ENCODE measurements at regions of chr15 and their contacts with region 1.

Region 1: DNA sequence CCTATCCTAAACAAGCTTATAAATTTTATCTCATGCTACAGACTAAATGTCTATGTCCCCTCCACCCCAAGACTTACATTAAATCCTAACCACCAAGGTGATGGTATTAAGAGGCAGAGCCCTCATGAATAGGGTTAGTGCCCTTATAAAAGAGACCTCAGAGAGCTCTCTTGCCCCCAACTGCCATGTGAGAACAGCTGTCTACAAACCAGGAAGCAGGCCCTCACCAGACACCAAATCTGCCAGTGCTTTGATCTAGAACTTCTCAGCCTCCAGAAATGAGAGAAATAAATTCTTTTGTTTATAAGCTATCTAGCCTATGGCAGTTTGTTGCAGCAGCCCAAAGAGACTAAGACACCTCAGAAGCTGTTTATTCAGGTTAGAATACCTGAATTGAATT is 58.5 kb downstream of the TP53BP1 start:
- DNase-seq: no peak
- ATAC-seq: no peak
- H3K4me3 Mint-ChIP-seq: no peak overlapping the region
- H3K27ac Mint-ChIP-seq: no peak overlapping the region
- H3K4me1 Mint-ChIP-seq: no peaks in the 10 kb centered on the region
- H3K27me3 Mint-ChIP-seq: no peaks in the 10 kb centered on the region
- CTCF ChIP-seq: no peak

Region 2: GRCh38 chr15:43483306-43484128 is 49.1 kb after region 1 on chr15:
- CTCF ChIA-PET with region 1: no interaction called
- POLR2A ChIA-PET with region 1: no interaction called
- DNase-seq: no peak
- ATAC-seq: no peak
- H3K4me3 Mint-ChIP-seq: no peak overlapping the region
- H3K27ac Mint-ChIP-seq: peak overlapping the region; percentile 24; the same call in 1 of the 2 replicates
- H3K4me1 Mint-ChIP-seq: peaks cover 4% of the 10 kb centered on the region
- H3K27me3 Mint-ChIP-seq: no peaks in the 10 kb centered on the region
- CTCF ChIP-seq: no peak

Region 3: DNA sequence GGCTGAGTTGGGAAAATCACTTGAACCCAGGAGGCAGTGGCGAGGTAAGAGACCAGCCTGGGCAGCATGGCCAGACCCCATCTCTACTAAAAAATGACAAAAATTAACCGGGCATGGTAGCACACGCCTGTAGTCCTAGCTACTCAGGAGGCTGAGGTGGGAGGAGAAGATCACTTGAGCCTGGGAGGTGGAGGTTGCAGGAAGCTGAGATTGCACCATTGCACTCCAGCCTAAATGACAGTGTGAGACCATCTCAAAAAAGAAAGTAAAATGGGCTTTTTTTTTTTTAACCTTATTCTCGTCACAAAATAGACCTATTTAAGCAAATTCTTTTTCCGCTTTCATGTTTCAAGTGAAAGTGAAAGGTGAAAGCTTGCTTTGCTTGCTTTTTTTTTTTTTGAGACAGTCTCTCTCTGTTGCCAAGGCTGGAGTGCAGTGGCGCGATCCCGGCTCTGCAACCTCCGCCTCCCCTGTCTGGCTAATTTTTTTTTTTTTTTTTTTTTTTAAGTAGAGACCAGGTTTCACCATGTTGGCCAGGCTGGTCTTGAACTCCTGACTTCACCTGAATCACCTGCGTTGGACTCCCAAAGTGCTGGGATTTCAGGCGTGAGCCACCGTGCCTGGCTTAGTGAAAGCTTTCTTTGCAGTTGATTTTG is 315.4 kb after region 1 on chr15:
- CTCF ChIA-PET with region 1: no interaction called
- POLR2A ChIA-PET with region 1: interaction called, 16 read pairs
- DNase-seq: no peak
- ATAC-seq: no peak
- H3K4me3 Mint-ChIP-seq: no peak overlapping the region
- H3K27ac Mint-ChIP-seq: peak overlapping the region; percentile 27; the same call in 1 of the 2 replicates
- H3K4me1 Mint-ChIP-seq: peaks cover 24% of the 10 kb centered on the region
- H3K27me3 Mint-ChIP-seq: no peaks in the 10 kb centered on the region
- CTCF ChIP-seq: no peak